ENCODE measurements at regions of chr22 and their contacts with region 1.

Region 1: DNA sequence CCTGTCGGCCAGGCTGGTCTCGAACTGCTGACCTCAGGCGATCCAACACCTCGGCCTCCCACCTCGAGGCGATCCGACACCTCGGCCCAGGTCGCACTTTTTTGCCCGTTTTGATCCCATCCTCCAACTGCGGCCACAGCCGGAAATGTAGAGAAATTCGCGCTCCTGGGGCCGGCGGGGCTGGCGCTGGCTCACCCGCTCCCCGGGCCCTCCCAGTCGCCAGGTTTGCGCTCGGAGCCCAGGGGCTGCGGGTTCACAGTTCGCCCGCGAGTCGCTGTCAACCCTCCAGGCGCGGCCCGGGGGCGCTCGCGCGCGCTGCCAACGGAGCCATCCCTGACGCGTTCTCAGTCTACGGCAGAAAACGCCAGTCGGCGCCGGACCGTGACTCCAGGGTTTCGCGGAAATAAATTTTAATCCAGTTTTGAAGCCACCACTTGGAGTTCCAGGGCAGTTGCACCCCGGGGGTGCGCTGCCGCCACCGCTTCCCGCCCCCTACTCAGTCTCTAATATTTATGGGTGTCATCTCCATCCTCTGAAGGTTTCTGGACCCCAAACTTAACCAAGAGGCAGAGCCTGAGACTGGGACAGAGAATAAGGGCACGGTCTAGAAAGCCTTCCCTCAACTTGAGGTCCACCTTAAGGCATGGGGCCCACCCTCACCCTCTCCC is 1.5 kb upstream of the KLHDC7B start:
- DNase-seq: peak; percentile 90
- ATAC-seq: peak; percentile 46
- H3K4me3 ChIP-seq: peak overlapping the region in 4 of 5 experiments; percentile 12 to 49 (median 33)
- H3K4me3 Mint-ChIP-seq: peak overlapping the region; percentile 45
- H3K27ac ChIP-seq: peak overlapping the region; percentile 72 to 75
- H3K27ac Mint-ChIP-seq: peak overlapping the region; percentile 90
- H3K4me1 ChIP-seq: peaks cover 42 to 63% of the 10 kb centered on the region in 2 donors
- H3K4me1 Mint-ChIP-seq: peaks cover 46% of the 10 kb centered on the region
- H3K27me3 ChIP-seq: no peaks in the 10 kb centered on the region
- H3K27me3 Mint-ChIP-seq: no peaks in the 10 kb centered on the region
- CTCF ChIP-seq: peak; percentile 79

Region 2: DNA sequence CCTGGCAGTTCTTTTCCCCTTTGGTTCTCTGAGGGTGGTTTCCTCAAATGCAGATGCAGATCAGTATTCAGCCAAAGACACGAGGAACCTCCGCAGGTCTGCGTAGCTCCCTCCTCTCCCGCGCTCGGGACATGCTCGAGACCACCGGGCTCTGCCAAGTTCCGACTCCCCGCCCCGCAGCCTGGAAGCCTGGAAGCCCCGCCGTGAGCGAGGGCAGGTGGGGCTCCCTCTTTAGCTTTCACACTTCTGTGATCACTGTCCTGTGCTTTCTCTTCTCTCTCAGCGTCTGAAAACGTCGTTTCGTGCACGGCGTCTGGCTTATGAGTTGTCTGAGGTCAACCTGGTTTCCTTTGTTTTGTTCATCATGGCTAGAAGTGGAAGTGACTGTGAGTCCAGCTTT is 663.9 kb before region 1 on chr22:
- CTCF ChIA-PET with region 1: no interaction called
- POLR2A ChIA-PET with region 1: no interaction called
- intact Hi-C with region 1: no loop called
- DNase-seq: no peak
- ATAC-seq: no peak
- H3K4me3 ChIP-seq: no peak overlapping the region
- H3K4me3 Mint-ChIP-seq: no peak overlapping the region
- H3K27ac ChIP-seq: no peak overlapping the region
- H3K27ac Mint-ChIP-seq: no peak overlapping the region
- H3K4me1 ChIP-seq: peaks cover 4 to 7% of the 10 kb centered on the region in 2 donors
- H3K4me1 Mint-ChIP-seq: peaks cover 21% of the 10 kb centered on the region
- H3K27me3 ChIP-seq: no peaks in the 10 kb centered on the region
- H3K27me3 Mint-ChIP-seq: no peaks in the 10 kb centered on the region
- CTCF ChIP-seq: no peak

Region 3: GRCh38 chr22:50190941-50191741 is 353.1 kb before region 1 on chr22:
- CTCF ChIA-PET with region 1: no interaction called
- POLR2A ChIA-PET with region 1: interaction called, 3 read pairs
- intact Hi-C with region 1: loop called (anchors 1 kb)
- DNase-seq: peak; percentile 97
- ATAC-seq: peak; percentile 44
- H3K4me3 ChIP-seq: peak overlapping the region; percentile 14 to 63 (median 48)
- H3K4me3 Mint-ChIP-seq: peak overlapping the region; percentile 86
- H3K27ac ChIP-seq: peak overlapping the region; percentile 99 to 100
- H3K27ac Mint-ChIP-seq: peak overlapping the region; percentile 99
- H3K4me1 ChIP-seq: peaks cover 84 to 97% of the 10 kb centered on the region in 2 donors
- H3K4me1 Mint-ChIP-seq: peaks cover 62% of the 10 kb centered on the region
- H3K27me3 ChIP-seq: no peaks in the 10 kb centered on the region
- H3K27me3 Mint-ChIP-seq: no peaks in the 10 kb centered on the region
- CTCF ChIP-seq: no peak

Region 4: DNA sequence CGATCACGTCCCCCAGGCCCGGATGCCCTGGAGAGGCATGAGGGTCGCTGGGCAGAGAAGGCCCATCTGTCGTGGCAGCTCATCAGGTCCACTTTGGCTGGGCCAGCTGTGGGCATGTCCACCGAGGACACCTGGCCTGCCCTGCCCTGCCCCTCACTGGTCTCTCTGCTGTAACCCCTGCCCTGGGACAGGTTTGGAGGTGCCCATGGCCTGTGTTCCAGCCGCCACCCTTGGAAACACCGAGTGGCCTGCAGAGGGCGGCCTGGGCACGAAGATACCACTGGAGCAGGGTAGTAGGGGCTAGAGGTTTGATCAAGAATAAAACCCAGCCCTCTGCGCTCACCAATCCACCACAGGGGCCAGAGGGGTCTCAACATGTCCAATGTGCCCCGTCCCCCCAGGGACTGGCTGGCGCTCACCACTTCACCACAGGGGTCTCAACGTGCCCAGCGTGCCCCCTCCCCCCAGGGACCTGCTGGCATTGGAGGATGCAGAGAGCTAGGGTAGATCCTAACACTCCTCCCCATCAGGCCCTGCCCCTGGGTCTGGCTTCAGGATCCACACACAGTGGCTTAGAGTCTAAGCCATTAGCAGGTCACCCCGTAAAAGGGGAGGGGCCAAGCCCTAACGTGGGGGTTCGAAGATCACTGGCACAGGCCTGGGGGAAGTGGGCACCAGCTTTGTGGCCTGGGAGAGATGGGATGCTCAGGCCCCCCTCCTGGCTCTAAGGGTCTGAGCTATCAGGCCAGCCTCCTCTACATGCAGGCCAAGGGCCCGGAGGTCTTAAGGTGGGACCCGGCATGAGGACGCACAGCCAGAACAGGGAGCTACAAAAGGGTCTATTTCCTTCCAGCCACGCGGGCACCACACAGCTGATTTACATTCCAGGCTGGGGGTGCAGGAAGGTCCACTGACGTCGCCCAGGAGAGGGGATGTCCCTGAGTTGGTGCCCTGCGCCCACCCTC is 291.8 kb before region 1 on chr22:
- CTCF ChIA-PET with region 1: no interaction called
- POLR2A ChIA-PET with region 1: no interaction called
- intact Hi-C with region 1: no loop called
- DNase-seq: peak; percentile 82
- ATAC-seq: peak; percentile 67
- H3K4me3 ChIP-seq: peak overlapping the region in 2 of 5 experiments; percentile 69 to 80
- H3K4me3 Mint-ChIP-seq: peak overlapping the region; percentile 86
- H3K27ac ChIP-seq: no peak overlapping the region
- H3K27ac Mint-ChIP-seq: peak overlapping the region; percentile 67
- H3K4me1 ChIP-seq: peaks cover 14 to 38% of the 10 kb centered on the region in 2 donors
- H3K4me1 Mint-ChIP-seq: peaks cover 22% of the 10 kb centered on the region
- H3K27me3 ChIP-seq: no peaks in the 10 kb centered on the region
- H3K27me3 Mint-ChIP-seq: no peaks in the 10 kb centered on the region
- CTCF ChIP-seq: peak; percentile 76

Region 5: GRCh38 chr22:50485201-50486131 is 58.7 kb before region 1 on chr22:
- CTCF ChIA-PET with region 1: no interaction called
- POLR2A ChIA-PET with region 1: no interaction called
- intact Hi-C with region 1: no loop called
- DNase-seq: no peak
- ATAC-seq: no peak
- H3K4me3 ChIP-seq: no peak overlapping the region
- H3K4me3 Mint-ChIP-seq: no peak overlapping the region
- H3K27ac ChIP-seq: no peak overlapping the region
- H3K27ac Mint-ChIP-seq: peak overlapping the region; percentile 26
- H3K4me1 ChIP-seq: peaks cover 16 to 31% of the 10 kb centered on the region in 2 donors
- H3K4me1 Mint-ChIP-seq: peaks cover 19% of the 10 kb centered on the region
- H3K27me3 ChIP-seq: peaks cover 0 to 26% (median 6%) of the 10 kb centered on the region in 4 experiments
- H3K27me3 Mint-ChIP-seq: no peaks in the 10 kb centered on the region
- CTCF ChIP-seq: no peak

Region 6: DNA sequence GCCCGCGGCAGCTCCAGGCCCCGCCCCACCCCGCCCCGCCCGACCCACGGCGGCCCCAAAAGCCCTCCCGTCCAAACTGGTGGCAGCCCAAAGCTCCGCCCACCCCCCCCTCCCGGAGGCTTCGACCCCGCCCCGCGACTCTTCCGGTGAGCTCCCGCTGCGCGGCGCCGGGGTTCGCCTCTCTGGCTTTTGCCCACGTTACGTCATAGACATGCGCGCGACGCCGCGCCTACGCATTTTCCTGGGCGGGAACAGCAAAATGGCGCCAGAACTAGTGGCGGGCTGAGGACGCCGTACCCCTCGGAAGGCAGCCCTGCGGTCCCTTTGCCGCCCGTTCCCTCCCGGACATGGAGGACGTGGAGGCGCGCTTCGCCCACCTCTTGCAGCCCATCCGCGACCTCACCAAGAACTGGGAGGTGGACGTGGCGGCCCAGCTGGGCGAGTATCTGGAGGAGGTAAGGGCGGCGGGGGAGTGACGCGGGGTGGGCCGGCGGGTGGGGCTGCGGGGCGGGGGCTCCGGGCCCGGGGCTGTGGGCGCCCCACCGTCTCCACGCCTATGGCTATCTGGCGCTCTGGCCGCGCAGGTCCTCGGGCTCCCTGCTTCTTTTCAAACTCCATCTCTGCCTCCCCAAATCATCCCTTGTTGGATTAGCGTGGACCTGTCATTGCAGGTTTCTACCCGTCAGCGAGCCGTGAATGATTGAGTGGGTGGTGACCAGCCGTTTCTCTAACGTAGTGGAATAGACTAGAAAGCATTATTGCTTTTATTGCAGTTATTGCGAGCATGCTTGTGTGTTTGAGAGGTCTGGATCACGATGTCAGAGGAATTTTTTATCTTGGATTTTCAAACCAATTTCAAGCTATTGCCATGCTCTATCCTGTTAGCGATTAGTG is 36.0 kb before region 1 on chr22 and contains the start of gene NCAPH2:
- CTCF ChIA-PET with region 1: interaction called, 5 read pairs
- POLR2A ChIA-PET with region 1: interaction called, 8 read pairs
- intact Hi-C with region 1: loop called (anchors 2 kb)
- DNase-seq: peak; percentile 98
- ATAC-seq: peak; percentile 71
- H3K4me3 ChIP-seq: peak within 1 kb of the TSS; percentile 75 to 92 (median 91)
- H3K4me3 Mint-ChIP-seq: peak within 1 kb of the TSS; percentile 95
- H3K27ac ChIP-seq: peak within 1 kb of the TSS; percentile 88 to 92
- H3K27ac Mint-ChIP-seq: peak within 1 kb of the TSS; percentile 98
- H3K4me1 ChIP-seq: peaks cover 19 to 29% of the 10 kb centered on the region in 2 donors
- H3K4me1 Mint-ChIP-seq: peaks cover 28% of the 10 kb centered on the region
- H3K27me3 ChIP-seq: no peaks in the 10 kb centered on the region
- H3K27me3 Mint-ChIP-seq: no peaks in the 10 kb centered on the region
- CTCF ChIP-seq: no peak
- total RNA-seq, gene NCAPH2: 71.5 and 76.9 TPM in 2 replicates

Region 7: DNA sequence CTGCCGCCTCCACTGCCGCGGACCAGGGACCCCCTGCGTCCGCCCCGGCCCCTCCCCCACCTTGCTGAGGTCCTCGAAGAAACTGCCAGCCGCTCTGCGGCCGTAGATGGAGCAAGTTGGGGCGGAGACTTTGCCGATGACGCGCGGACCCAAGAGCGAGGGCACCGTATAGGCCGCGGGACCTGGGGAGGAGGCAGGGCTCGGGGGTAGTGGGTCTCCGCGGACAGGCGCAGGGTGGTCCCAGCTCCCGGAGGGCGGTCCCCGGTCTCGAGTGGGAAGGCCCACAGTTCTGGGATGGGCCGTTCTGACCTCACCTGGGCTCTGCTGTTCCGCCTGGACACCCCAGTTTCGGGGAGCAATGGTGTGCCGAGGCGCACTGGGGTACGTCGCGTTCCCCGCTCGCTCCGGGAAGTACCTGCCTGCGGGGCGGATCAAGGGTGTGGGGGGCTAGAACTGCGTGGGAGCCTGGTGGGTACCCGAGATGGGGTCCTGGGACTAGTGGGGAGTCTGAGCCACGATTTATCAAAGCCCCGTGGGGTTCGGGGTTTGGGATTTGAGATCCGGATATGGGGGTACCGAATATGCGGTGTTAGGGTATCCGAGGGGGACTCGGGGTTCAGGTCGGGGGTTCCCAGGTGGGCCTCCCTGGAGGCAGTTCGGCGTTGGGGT is 13.2 kb before region 1 on chr22:
- CTCF ChIA-PET with region 1: interaction called, 81 read pairs
- POLR2A ChIA-PET with region 1: interaction called, 104 read pairs
- intact Hi-C with region 1: loop called (anchors 1 kb)
- DNase-seq: peak; percentile 95
- ATAC-seq: peak; percentile 44
- H3K4me3 ChIP-seq: peak overlapping the region; percentile 47 to 95 (median 95)
- H3K4me3 Mint-ChIP-seq: peak overlapping the region; percentile 95
- H3K27ac ChIP-seq: peak overlapping the region; percentile 99 to 100
- H3K27ac Mint-ChIP-seq: peak overlapping the region; percentile 99
- H3K4me1 ChIP-seq: peaks cover 22 to 73% of the 10 kb centered on the region in 2 donors
- H3K4me1 Mint-ChIP-seq: peaks cover 54% of the 10 kb centered on the region
- H3K27me3 ChIP-seq: no peaks in the 10 kb centered on the region
- H3K27me3 Mint-ChIP-seq: no peaks in the 10 kb centered on the region
- CTCF ChIP-seq: no peak

Region 8: GRCh38 chr22:50582562-50583293 is 38.5 kb after region 1 on chr22 and contains the start of gene CHKB:
- CTCF ChIA-PET with region 1: interaction called, 5 read pairs
- POLR2A ChIA-PET with region 1: interaction called, 4 read pairs
- intact Hi-C with region 1: loop called (anchors 2 kb)
- DNase-seq: peak; percentile 98
- ATAC-seq: peak; percentile 94
- H3K4me3 ChIP-seq: peak within 1 kb of the TSS; percentile 58 to 91 (median 80)
- H3K4me3 Mint-ChIP-seq: peak within 1 kb of the TSS; percentile 89
- H3K27ac ChIP-seq: peak within 1 kb of the TSS; percentile 82 to 96
- H3K27ac Mint-ChIP-seq: peak within 1 kb of the TSS; percentile 93
- H3K4me1 ChIP-seq: peaks cover 14 to 18% of the 10 kb centered on the region in 2 donors
- H3K4me1 Mint-ChIP-seq: peaks cover 24% of the 10 kb centered on the region
- H3K27me3 ChIP-seq: no peaks in the 10 kb centered on the region
- H3K27me3 Mint-ChIP-seq: no peaks in the 10 kb centered on the region
- CTCF ChIP-seq: no peak
- total RNA-seq, gene CHKB: 238 and 239 TPM in 2 replicates